Endothelial cell of umbilical vein (primary cell): ENCODE measurements at regions of chr1 and their contacts with region 1.

Region 1: DNA sequence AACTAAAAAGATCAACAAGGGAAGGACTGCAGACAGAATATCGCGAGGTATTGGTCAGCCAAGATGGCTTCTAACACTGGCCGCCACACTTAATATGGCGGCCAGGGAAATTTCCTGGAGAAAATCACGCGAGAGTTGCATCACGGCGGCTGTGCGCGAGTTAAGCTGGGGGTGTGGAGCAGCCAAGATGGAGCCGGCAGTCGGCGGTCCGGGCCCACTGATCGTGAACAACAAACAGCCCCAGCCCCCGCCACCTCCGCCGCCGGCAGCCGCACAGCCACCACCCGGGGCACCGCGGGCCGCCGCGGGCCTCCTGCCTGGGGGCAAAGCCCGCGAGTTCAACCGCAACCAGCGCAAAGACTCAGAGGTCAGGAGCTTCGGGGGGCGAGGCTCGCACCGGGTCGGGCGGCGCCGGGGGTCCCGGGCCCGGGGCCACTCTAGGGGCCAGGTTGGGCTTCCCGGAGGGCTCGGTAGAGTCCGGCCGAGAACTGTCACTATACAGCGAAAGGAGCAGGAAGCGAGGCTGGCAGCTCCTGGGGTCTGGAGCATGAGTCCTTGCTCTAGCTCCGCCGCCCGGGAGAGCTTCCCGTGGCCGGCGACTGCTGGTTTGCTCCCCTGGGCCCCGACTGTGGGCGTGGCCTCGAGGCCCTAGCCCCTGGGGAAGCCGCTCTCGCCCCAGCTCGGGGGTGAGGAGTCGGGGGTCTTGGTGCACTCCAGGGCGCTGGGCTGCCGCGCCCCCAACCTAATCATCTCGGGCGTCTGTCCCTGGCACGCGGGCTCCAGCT is at the start of gene STRIP1:
- DNase-seq: peak; percentile 96
- H3K4me3 ChIP-seq: peak within 1 kb of the TSS; percentile 76 to 90 (median 82)
- H3K27ac ChIP-seq: peak within 1 kb of the TSS; percentile 61
- H3K4me1 ChIP-seq: peaks cover 9% of the 10 kb centered on the region
- H3K27me3 ChIP-seq: no peaks in the 10 kb centered on the region
- CTCF ChIP-seq: no peak
- POLR2A ChIP-seq: peak; percentile 74
- total RNA-seq, gene STRIP1: 38.9 and 42.1 TPM in 2 replicates

Region 2: GRCh38 chr1:109773146-109773899 is 261.3 kb before region 1 on chr1:
- CTCF ChIA-PET with region 1: interaction called, 12 read pairs
- POLR2A ChIA-PET with region 1: no interaction called
- dilution Hi-C with region 1: no loop called
- intact Hi-C with region 1: no loop called
- DNase-seq: peak; percentile 78
- H3K4me3 ChIP-seq: no peak overlapping the region
- H3K27ac ChIP-seq: no peak overlapping the region
- H3K4me1 ChIP-seq: no peaks in the 10 kb centered on the region
- H3K27me3 ChIP-seq: peaks cover 0 to 4% of the 10 kb centered on the region in 2 experiments
- CTCF ChIP-seq: peak; percentile 88 to 92
- POLR2A ChIP-seq: no peak

Region 3: GRCh38 chr1:110011527-110012041 is 23.1 kb before region 1 on chr1:
- CTCF ChIA-PET with region 1: interaction called, 14 read pairs
- POLR2A ChIA-PET with region 1: no interaction called
- dilution Hi-C with region 1: no loop called
- intact Hi-C with region 1: no loop called
- DNase-seq: peak; percentile 49
- H3K4me3 ChIP-seq: no peak overlapping the region
- H3K27ac ChIP-seq: no peak overlapping the region
- H3K4me1 ChIP-seq: no peaks in the 10 kb centered on the region
- H3K27me3 ChIP-seq: no peaks in the 10 kb centered on the region
- CTCF ChIP-seq: peak; percentile 24 to 40
- POLR2A ChIP-seq: no peak

Region 4: DNA sequence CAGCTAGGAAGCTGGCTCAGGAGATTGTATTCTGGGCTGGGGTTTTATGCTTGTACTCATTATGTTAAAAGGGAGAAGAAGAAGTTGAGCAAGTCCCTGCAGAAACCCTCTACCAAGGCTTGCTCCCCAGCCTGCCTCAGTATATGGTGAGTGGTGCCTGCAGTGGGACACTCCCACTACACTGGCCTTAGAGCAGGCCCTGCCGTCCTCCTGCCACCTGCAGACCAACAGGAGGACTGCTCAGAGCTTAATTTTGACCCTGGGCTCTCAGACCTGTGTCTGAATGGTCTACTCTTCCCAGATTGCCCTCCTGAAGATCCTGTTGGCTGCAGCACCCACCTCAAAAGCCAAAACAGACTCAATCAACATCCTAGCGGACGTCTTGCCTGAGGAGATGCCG is 12.8 kb after region 1 on chr1:
- CTCF ChIA-PET with region 1: interaction called, 9 read pairs
- POLR2A ChIA-PET with region 1: no interaction called
- dilution Hi-C with region 1: no loop called
- intact Hi-C with region 1: loop called (anchors 1 kb)
- DNase-seq: no peak
- H3K4me3 ChIP-seq: no peak overlapping the region
- H3K27ac ChIP-seq: no peak overlapping the region
- H3K4me1 ChIP-seq: no peaks in the 10 kb centered on the region
- H3K27me3 ChIP-seq: no peaks in the 10 kb centered on the region
- CTCF ChIP-seq: no peak
- POLR2A ChIP-seq: no peak

Region 5: GRCh38 chr1:110106013-110106941 is 71.6 kb after region 1 on chr1:
- CTCF ChIA-PET with region 1: interaction called, 34 read pairs
- POLR2A ChIA-PET with region 1: no interaction called
- dilution Hi-C with region 1: no loop called
- intact Hi-C with region 1: loop called (anchors 1 kb)
- DNase-seq: peak; percentile 65
- H3K4me3 ChIP-seq: no peak overlapping the region
- H3K27ac ChIP-seq: no peak overlapping the region
- H3K4me1 ChIP-seq: peaks cover 3% of the 10 kb centered on the region
- H3K27me3 ChIP-seq: peaks cover 0 to 3% of the 10 kb centered on the region in 2 experiments
- CTCF ChIP-seq: peak; percentile 80 to 96
- POLR2A ChIP-seq: no peak